SK-N-SH (cell line): ENCODE measurements at regions of chr10 and their contacts with region 1.

Region 1: DNA sequence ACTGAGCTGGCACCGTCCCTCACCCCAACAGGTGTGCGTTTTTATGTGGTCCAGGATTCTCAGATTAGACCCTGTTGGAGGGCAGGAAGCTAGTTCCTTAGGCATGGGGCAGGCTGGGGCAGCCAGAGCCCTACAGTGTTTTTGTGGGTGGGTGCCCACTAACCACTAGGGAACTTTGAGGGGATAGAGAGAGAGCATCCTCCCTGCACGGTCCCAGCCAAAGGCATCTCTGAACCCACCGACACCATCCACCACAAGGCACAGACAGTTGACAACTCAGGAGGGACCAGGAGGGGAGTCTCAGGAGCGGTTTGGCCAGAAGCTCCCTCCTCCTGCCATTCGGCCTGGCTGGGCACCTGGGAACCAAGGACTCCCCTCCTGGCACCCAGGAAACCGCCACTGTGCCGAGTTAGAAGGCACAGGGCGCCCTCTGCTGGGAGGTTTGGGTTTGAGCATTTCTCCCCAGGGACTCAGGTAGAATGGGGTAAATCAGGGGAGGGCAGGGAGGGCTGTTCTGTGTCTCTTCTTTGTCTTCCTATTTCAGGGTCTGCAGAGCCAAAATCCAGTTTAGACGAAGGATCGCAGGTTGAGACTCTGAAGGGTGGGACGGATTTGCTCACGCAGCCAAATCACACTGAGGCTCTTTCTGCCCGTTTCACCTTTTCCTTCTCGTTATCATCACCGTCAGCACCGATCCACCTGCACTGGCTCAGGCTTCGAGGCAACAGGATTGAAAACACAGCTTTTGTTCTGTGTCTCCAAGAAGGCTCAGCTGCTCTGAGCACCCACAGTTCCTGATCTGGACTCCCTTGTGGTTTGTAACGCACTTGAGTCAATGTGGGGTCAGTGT is 84.8 kb upstream of the COL13A1 start:
- DNase-seq: peak; percentile 84
- H3K4me3 ChIP-seq: no peak overlapping the region; a peak in 1 of 4 replicates
- H3K27ac ChIP-seq: no peak overlapping the region
- H3K4me1 ChIP-seq: no peaks in the 10 kb centered on the region; a peak in 1 of 4 replicates
- H3K27me3 ChIP-seq: peaks cover 7% of the 10 kb centered on the region; the same call in 1 of the 2 replicates
- CTCF ChIP-seq: peak; percentile 77
- EP300 ChIP-seq: no peak
- RAD21 ChIP-seq: peak; percentile 93

Region 2: DNA sequence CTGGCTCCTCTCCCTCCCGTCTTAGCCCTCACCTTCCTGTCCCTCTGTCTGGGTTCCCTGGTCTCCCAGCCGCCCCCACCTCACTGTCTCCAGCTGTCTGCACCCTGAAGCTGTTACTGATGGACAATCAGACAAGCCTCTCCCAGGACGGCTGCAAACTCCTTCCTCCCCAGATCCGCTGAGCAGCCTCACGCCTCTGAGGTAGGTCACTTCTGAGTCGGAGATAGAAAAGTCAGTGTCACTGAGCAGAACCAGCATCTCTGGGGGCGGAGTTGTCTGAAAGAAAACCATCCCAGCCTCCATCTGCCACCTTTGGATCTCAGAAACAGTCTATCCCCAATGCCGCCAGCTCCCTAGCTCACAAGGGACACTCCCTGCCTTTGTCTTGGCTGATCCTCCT is 59.5 kb before region 1 on chr10:
- CTCF ChIA-PET with region 1: interaction called, 571 read pairs
- POLR2A ChIA-PET with region 1: no interaction called
- DNase-seq: no peak
- H3K4me3 ChIP-seq: no peak overlapping the region
- H3K27ac ChIP-seq: no peak overlapping the region
- H3K4me1 ChIP-seq: peaks cover 0 to 31% of the 10 kb centered on the region in 2 experiments; a peak in 1 of 4 replicates
- H3K27me3 ChIP-seq: peaks cover 43% of the 10 kb centered on the region
- CTCF ChIP-seq: no peak
- EP300 ChIP-seq: no peak
- RAD21 ChIP-seq: no peak

Region 3: GRCh38 chr10:69684020-69684980 is 32.6 kb before region 1 on chr10:
- CTCF ChIA-PET with region 1: interaction called, 29 read pairs
- POLR2A ChIA-PET with region 1: no interaction called
- DNase-seq: peak; percentile 39
- H3K4me3 ChIP-seq: no peak overlapping the region
- H3K27ac ChIP-seq: no peak overlapping the region; a peak in 1 of 4 replicates
- H3K4me1 ChIP-seq: peaks cover 0 to 62% of the 10 kb centered on the region in 2 experiments; a peak in 2 of 4 replicates
- H3K27me3 ChIP-seq: peaks cover 31% of the 10 kb centered on the region; the same call in 1 of the 2 replicates
- CTCF ChIP-seq: no peak
- EP300 ChIP-seq: no peak
- RAD21 ChIP-seq: no peak

Region 4: DNA sequence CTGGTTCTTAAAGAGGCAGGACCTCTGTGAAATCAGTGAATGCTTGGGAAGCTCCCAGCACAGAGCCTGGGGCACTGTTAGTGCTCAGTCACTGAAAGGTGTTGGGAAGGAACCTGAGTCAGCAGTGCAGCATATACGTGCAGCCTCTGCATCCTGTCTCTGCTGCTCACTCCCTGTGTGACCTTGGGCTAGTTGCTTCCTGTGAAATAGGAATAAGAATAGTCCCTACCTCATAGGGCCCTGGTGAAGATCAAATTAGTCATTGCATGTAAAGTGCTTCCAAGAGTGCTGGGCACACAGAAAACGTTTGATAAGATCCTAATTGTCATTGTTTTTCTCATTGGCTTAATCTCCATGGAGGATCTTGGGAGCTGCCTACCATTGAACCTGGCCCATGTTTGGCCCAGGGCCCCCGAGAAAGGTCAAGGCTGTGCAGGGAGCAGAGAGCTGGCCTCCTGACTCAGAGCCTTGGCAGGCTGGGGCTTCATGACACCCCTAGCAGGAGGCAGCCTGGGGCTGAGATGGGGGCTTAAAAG is 11.5 kb after region 1 on chr10:
- CTCF ChIA-PET with region 1: interaction called, 81 read pairs
- POLR2A ChIA-PET with region 1: no interaction called
- DNase-seq: peak; percentile 66
- H3K4me3 ChIP-seq: no peak overlapping the region
- H3K27ac ChIP-seq: peak overlapping the region; percentile 39 to 51; a peak in 3 of 4 replicates
- H3K4me1 ChIP-seq: peaks cover 12 to 39% of the 10 kb centered on the region in 2 experiments; a peak in 3 of 4 replicates
- H3K27me3 ChIP-seq: no peaks in the 10 kb centered on the region
- CTCF ChIP-seq: no peak
- EP300 ChIP-seq: no peak
- RAD21 ChIP-seq: no peak